Breast epithelium (tissue), 4 donors: ENCODE measurements at regions of chr1 and their contacts with region 1.

Region 1: GRCh38 chr1:163278602-163279001 is 43.2 kb upstream of the NUF2 start:
- DNase-seq: no peak
- H3K4me3 ChIP-seq: no peak overlapping the region
- H3K27ac ChIP-seq: no peak overlapping the region
- H3K4me1 ChIP-seq: no peaks in the 10 kb centered on the region
- H3K27me3 ChIP-seq: no peaks in the 10 kb centered on the region
- CTCF ChIP-seq: no peak
- POLR2A ChIP-seq: no peak

Region 2: GRCh38 chr1:162091681-162092524 is 1186.7 kb before region 1 on chr1:
- intact Hi-C with region 1: no loop called
- DNase-seq: no peak
- H3K4me3 ChIP-seq: no peak overlapping the region
- H3K27ac ChIP-seq: no peak overlapping the region
- H3K4me1 ChIP-seq: no peaks in the 10 kb centered on the region
- H3K27me3 ChIP-seq: no peaks in the 10 kb centered on the region
- CTCF ChIP-seq: no peak
- POLR2A ChIP-seq: no peak

Region 3: GRCh38 chr1:163263818-163264217 is 14.8 kb before region 1 on chr1:
- intact Hi-C with region 1: no loop called
- DNase-seq: no peak
- H3K4me3 ChIP-seq: no peak overlapping the region
- H3K27ac ChIP-seq: no peak overlapping the region
- H3K4me1 ChIP-seq: no peaks in the 10 kb centered on the region
- H3K27me3 ChIP-seq: no peaks in the 10 kb centered on the region
- CTCF ChIP-seq: no peak
- POLR2A ChIP-seq: no peak

Region 4: GRCh38 chr1:163331116-163331515 is 52.5 kb after region 1 on chr1:
- intact Hi-C with region 1: loop called (anchors 2 kb)
- DNase-seq: no peak
- H3K4me3 ChIP-seq: no peak overlapping the region
- H3K27ac ChIP-seq: no peak overlapping the region
- H3K4me1 ChIP-seq: no peaks in the 10 kb centered on the region
- H3K27me3 ChIP-seq: no peaks in the 10 kb centered on the region
- CTCF ChIP-seq: no peak
- POLR2A ChIP-seq: no peak